Vagina (tissue), 2 donors: ENCODE measurements at regions of chr5 and their contacts with region 1.

Region 1: DNA sequence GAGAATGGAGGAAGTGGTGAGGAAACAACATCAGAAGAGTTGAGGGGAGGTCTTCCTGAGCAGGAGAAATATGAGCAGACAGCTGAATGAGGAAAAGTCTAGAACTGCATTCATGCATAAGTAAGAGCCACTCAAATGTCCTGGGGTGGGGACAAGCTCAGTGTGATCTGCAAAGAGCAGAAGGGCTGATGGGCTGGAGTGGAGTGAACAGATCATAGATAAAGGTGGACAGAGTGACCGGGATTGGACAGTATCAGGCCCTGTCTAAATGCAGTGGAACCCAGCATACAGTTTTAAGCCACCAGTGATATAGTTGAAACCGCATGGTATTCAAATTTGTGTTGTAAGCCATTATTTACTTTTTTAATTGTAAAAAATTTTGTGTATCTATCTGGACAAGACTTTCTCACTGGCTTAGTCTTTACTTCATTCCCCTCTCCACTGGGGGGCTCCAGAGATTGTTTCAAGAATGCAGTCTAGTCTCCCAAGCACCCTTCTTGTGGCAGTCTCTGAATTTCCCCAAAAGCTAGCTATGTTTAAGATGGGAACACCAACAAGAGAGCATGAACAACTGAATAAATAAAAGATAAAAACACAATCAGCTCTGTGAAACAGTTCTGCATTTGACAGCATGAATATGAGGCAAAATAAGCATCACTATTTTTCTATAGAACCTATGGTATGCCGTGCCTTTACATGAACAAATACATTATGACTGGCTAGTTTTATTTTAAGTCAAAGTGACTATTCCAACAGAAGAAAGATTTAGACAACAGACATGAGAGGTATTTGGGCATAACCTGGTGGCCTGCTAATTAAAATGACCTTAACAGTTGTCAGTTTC is 10.7 kb upstream of the STK32A start:
- DNase-seq: no peak
- H3K4me3 ChIP-seq: no peak overlapping the region
- H3K27ac ChIP-seq: no peak overlapping the region
- H3K4me1 ChIP-seq: no peaks in the 10 kb centered on the region
- H3K27me3 ChIP-seq: no peaks in the 10 kb centered on the region
- CTCF ChIP-seq: peak in 2 of 3 experiments; percentile 22 to 69
- POLR2A ChIP-seq: no peak

Region 2: GRCh38 chr5:145711417-145711816 is 1512.8 kb before region 1 on chr5:
- intact Hi-C with region 1: no loop called
- DNase-seq: no peak
- H3K4me3 ChIP-seq: no peak overlapping the region
- H3K27ac ChIP-seq: no peak overlapping the region
- H3K4me1 ChIP-seq: no peaks in the 10 kb centered on the region
- H3K27me3 ChIP-seq: no peaks in the 10 kb centered on the region
- CTCF ChIP-seq: no peak
- POLR2A ChIP-seq: no peak

Region 3: GRCh38 chr5:146805081-146805480 is 419.1 kb before region 1 on chr5:
- intact Hi-C with region 1: no loop called
- DNase-seq: no peak
- H3K4me3 ChIP-seq: no peak overlapping the region
- H3K27ac ChIP-seq: no peak overlapping the region
- H3K4me1 ChIP-seq: no peaks in the 10 kb centered on the region
- H3K27me3 ChIP-seq: no peaks in the 10 kb centered on the region
- CTCF ChIP-seq: no peak
- POLR2A ChIP-seq: no peak

Region 4: DNA sequence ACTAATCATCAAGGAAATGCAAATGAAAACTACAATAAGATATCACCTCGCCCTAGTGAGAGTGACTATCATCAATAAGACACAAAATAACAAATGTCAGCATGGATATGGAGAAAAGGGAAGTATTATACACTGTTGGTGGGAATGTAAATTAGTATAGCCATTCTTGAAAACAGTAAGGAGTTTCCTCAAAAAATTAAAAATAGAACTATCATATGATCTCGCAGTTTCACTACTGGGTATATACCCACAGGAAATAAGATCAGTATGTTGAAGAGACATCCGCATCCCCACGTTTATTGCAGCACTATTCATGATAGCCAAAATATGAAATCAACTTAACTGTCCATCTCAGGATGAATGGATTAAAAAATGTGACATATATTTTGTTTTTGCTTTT is 21.0 kb before region 1 on chr5:
- intact Hi-C with region 1: no loop called
- DNase-seq: no peak
- H3K4me3 ChIP-seq: no peak overlapping the region
- H3K27ac ChIP-seq: no peak overlapping the region
- H3K4me1 ChIP-seq: no peaks in the 10 kb centered on the region
- H3K27me3 ChIP-seq: no peaks in the 10 kb centered on the region
- CTCF ChIP-seq: no peak
- POLR2A ChIP-seq: no peak

Region 5: GRCh38 chr5:147369742-147370374 is 145.7 kb after region 1 on chr5:
- intact Hi-C with region 1: loop called (anchors 10 kb)
- DNase-seq: no peak
- H3K4me3 ChIP-seq: no peak overlapping the region
- H3K27ac ChIP-seq: no peak overlapping the region
- H3K4me1 ChIP-seq: no peaks in the 10 kb centered on the region
- H3K27me3 ChIP-seq: no peaks in the 10 kb centered on the region
- CTCF ChIP-seq: peak in 1 of 3 experiments; percentile 29
- POLR2A ChIP-seq: no peak

Region 6: DNA sequence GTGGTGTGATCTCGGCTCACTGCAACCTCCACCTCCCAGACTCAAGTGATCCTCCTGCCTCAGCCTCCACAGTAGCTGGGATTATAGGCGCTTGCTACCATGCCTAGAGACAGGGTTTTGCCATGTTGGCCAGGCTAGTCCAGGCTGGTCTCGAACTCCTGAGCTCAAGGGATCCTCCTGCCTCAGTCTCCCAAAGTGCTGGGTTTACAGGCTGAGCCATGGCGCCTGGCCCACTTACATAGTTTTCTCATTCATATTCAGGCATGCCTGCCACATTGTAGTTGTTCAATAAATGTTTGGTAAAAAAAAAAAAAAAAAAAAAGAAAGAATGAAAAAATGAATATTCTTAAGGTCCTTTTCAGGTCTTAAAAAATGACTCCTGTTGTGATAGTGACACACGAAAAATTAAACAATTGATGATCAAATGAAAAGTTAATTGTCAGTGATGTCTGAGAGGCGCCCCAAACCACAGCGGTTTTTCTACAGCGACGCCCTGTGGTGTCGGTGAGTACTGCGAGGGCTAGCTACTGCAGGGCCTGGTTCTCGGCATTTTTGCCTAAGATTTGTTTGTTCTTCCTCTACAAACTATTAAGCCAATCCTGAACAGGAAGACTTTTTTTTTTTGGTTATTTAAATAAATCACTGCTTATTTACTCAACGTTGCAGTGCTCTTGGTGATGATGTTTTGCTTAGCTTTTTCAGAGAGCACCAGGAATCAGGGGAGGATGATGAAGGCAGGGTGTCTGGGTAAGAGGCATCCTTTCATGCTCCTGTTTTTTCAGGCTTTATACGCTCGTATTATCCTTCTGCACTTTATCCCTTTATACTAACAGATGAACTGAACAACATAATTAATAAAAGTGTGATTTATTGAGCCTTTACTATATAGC is 352.7 kb after region 1 on chr5:
- intact Hi-C with region 1: loop called (anchors 5 kb)
- DNase-seq: no peak
- H3K4me3 ChIP-seq: no peak overlapping the region
- H3K27ac ChIP-seq: no peak overlapping the region
- H3K4me1 ChIP-seq: no peaks in the 10 kb centered on the region
- H3K27me3 ChIP-seq: no peaks in the 10 kb centered on the region
- CTCF ChIP-seq: peak; percentile 41 to 74 (median 54)
- POLR2A ChIP-seq: no peak